ENCODE measurements at regions of chr3 and their contacts with region 1.

Region 1: GRCh38 chr3:170055209-170055608 is 17.4 kb downstream of the GPR160 start:
- DNase-seq: no peak
- H3K4me3 ChIP-seq: peak overlapping the region in 2 of 8 donors; percentile 6 to 35
- H3K27ac ChIP-seq: no peak overlapping the region
- H3K4me1 ChIP-seq: peaks cover 0 to 38% (median 8%) of the 10 kb centered on the region in 6 donors
- H3K27me3 ChIP-seq: no peaks in the 10 kb centered on the region
- CTCF ChIP-seq: no peak
- POLR2A ChIP-seq: no peak

Region 2: DNA sequence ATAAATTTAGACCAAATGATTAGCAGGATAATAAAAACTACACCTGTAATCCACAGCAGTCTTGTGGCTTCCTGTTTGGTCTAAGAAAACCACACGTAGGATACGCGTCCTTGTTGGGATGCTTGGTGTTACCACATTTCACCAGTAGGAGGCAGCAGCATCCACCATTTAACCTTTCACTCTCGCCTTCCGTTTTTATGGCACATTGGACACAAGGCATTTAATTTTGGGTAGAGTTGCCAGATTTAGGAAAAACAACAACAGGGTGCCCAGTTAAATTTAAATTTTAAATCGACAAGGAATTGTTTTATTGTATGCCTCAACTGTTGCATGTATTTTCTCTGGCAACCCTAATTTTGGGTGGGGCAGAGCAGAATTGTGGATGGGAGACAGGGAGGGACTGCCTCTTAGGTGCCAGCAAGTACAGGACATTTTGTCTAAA is 191.7 kb before region 1 on chr3:
- intact Hi-C with region 1: loop called (anchors 10 kb)
- DNase-seq: no peak
- H3K4me3 ChIP-seq: no peak overlapping the region
- H3K27ac ChIP-seq: no peak overlapping the region
- H3K4me1 ChIP-seq: peaks cover 0 to 34% (median 19%) of the 10 kb centered on the region in 6 donors
- H3K27me3 ChIP-seq: no peaks in the 10 kb centered on the region
- CTCF ChIP-seq: peak; percentile 89 to 96 (median 93)
- POLR2A ChIP-seq: no peak

Region 3: DNA sequence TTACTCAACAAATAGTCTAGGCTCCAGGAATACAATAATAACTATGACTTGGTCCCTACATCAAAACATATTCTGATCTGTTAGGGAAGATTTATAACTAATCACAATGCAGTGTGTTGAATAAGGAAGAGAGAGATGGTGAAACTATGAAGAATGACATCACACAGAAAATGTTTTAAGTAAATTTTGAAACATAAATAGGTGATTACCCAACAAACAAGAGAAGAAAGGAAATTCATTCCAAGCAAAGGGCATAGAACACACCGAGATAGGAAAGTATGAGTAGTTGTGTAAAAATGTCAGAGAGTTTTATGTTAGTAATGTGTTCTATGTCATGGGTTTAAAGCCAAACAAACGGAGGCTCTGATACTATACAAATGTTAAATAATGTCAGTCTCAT is 75.2 kb before region 1 on chr3:
- intact Hi-C with region 1: no loop called
- DNase-seq: no peak
- H3K4me3 ChIP-seq: no peak overlapping the region
- H3K27ac ChIP-seq: peak overlapping the region in 6 of 8 donors; percentile 23 to 72 (median 59)
- H3K4me1 ChIP-seq: peaks cover 0 to 76% (median 15%) of the 10 kb centered on the region in 6 donors
- H3K27me3 ChIP-seq: no peaks in the 10 kb centered on the region
- CTCF ChIP-seq: no peak
- POLR2A ChIP-seq: no peak